HEK293T (cell line): ENCODE measurements at regions of chr13 and their contacts with region 1.

Region 1: GRCh38 chr13:61965756-61966155 is 550.1 kb upstream of the PCDH20 start:
- DNase-seq: no peak

Region 2: DNA sequence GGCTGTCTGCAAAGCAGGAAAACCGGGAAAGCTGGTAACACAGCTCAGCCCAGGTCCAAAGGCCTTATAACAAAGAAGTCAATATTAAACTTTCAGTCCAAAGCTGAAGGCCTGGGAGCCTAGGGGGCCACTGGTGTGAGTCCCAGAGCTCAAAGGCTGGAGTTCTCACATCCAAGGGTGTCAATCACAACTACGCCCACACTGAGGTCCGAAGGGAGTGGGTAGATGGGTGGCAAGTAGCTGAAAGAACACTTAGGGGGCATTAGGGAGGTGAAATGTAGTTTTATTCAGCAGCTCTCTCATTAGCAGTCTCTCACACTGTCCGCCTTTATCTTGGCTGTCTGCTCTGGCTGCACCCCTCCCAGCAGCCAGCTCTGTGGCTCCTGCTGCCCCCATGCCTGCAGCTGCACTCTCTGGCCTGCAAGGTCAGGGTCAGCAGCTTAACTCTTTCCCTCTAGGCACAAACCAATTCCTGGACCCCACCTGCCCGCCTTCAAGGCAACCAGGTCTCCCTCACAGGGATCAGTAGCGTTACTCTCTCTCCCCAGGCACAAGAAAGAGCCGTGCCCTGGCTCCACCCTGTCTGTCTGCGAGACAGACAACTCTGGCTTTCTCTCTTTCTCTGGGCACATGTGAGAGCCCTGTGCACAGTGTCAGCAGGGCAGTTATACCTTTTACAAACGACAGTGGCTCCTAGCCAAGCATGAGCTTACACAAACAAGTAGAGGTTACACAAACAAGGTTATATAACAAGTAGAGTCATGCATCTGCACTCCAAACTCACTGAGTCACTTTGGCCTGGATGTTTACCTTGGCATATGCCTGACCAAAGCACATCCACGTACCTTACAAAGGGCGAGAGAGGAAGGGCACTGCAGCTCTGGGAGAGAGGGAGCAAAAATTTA is 300.7 kb before region 1 on chr13:
- CTCF ChIA-PET with region 1: no interaction called
- POLR2A ChIA-PET with region 1: no interaction called
- DNase-seq: no peak

Region 3: DNA sequence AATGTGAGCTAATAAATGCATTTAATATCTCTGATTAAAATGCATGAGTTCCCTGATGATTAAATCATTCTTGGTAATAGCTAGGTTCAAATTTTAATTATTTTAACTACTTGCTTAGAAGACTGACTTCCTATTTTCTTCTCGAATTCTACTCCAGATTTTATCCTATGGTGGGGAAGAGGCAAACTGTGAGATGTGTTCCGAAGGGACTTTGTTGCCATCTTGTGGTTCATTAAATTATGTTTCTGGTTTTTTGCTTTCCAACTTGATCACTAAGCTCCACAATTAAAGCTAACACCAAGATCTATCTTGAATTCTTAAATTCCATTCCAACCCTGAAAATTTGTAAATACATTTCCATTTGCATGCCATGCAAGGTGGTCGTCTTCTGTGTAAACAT is 11.7 kb before region 1 on chr13:
- CTCF ChIA-PET with region 1: interaction called, 14 read pairs
- POLR2A ChIA-PET with region 1: no interaction called
- DNase-seq: peak; percentile 84